H1 (cell line): ENCODE measurements at regions of chr5 and their contacts with region 1.

Region 1: DNA sequence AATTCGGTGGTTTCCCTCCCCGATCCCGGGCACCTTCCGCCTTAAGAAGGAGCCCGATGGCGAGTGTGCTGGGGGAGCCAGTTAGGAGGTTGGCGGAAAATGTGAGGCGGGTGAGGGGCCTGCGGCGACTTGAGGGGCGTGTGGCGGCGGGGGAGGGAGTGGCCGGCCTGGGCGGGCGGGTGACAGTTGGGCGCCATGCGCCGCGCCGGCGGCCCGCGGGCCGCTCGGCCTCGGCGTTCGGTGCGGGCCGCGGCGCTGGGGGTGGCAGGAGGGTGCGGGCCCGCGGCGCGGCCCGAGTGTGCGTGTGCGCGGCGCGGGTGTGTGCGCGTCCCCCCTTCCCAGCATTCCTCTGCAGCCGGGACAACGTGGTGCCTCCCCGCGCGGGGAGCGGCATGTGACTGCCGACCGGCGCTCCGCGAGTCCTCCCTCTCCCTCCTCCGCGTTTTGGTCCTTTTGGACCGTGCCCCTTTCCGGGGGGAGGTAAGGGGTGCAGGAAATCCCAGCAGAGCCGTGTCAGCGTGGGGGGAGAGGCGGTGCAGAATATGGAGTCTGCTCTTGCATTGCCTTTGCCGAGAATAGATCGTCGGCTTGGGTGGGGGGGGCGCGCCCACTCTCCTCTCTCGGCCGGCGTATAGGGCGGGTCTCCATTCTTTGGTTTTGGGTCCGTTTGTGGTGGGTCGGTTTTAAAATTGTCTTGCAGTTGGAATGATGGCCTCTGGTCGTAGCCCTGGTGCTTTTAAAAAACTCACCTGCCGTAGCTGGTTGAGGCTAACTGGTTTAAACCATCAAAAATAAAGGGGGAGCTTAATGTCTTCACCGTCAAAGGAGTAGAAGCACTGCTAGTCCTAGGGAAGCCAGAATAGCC is 1.9 kb downstream of the LARP1 start:
- DNase-seq: no peak
- H3K4me3 ChIP-seq: peak overlapping the region; percentile 66 to 98 (median 94)
- H3K27ac ChIP-seq: peak overlapping the region; percentile 84; the same call in 1 of the 2 replicates
- H3K4me1 ChIP-seq: peaks cover 16 to 35% (median 28%) of the 10 kb centered on the region in 4 experiments
- H3K27me3 ChIP-seq: no peaks in the 10 kb centered on the region
- CTCF ChIP-seq: no peak
- EP300 ChIP-seq: no peak
- POLR2A ChIP-seq: peak in 1 of 2 experiments; percentile 58; a peak in 2 of 3 replicates
- RAD21 ChIP-seq: no peak

Region 2: GRCh38 chr5:154547551-154547950 is 209.5 kb before region 1 on chr5:
- CTCF ChIA-PET with region 1: no interaction called
- POLR2A ChIA-PET with region 1: no interaction called
- DNase-seq: no peak
- H3K4me3 ChIP-seq: no peak overlapping the region
- H3K27ac ChIP-seq: no peak overlapping the region
- H3K4me1 ChIP-seq: no peaks in the 10 kb centered on the region
- H3K27me3 ChIP-seq: 0 out of 7 replicates have a peak, but pooled peaks cover 0 to 2% (median 0%) of the 10 kb centered on the region in 4 experiments
- CTCF ChIP-seq: no peak
- EP300 ChIP-seq: no peak
- POLR2A ChIP-seq: no peak
- RAD21 ChIP-seq: no peak

Region 3: GRCh38 chr5:154690489-154690888 is 66.6 kb before region 1 on chr5:
- CTCF ChIA-PET with region 1: interaction called, 7 read pairs
- POLR2A ChIA-PET with region 1: interaction called, 11 read pairs
- DNase-seq: no peak
- H3K4me3 ChIP-seq: no peak overlapping the region
- H3K27ac ChIP-seq: no peak overlapping the region
- H3K4me1 ChIP-seq: peaks cover 7 to 14% (median 10%) of the 10 kb centered on the region in 4 experiments; a peak in 6 of 7 replicates
- H3K27me3 ChIP-seq: no peaks in the 10 kb centered on the region
- CTCF ChIP-seq: no peak
- EP300 ChIP-seq: no peak
- POLR2A ChIP-seq: no peak
- RAD21 ChIP-seq: no peak

Region 4: DNA sequence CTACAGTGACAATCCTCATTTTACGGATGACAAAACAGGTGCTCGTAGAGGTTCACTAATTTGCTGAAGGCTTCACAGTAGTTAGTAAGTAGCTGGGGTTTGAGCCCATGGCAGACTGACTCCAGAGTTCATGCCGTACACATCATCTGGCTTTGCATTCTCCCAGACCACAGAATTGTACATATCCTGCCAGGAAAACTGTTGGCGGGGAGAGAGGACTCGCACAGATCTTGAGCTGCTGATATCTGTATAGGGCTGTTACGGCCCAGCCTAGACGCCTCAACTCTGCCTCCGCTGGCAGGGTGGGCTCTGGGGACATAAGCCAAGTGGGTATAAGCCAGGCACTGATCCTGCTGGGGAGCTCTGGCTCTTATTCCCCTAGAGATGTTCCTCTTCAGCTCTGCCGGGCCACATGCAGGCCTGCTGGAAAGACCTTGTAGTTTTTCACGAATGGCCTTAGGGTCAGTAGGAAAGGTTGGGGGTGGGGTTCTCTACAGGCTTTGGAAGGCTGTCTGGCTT is 14.4 kb after region 1 on chr5:
- CTCF ChIA-PET with region 1: interaction called, 9 read pairs
- POLR2A ChIA-PET with region 1: interaction called, 307 read pairs
- DNase-seq: no peak
- H3K4me3 ChIP-seq: no peak overlapping the region
- H3K27ac ChIP-seq: no peak overlapping the region
- H3K4me1 ChIP-seq: peaks cover 10 to 57% (median 46%) of the 10 kb centered on the region in 4 experiments
- H3K27me3 ChIP-seq: no peaks in the 10 kb centered on the region
- CTCF ChIP-seq: peak; percentile 10 to 22 (median 22); a peak in 3 of 4 replicates
- EP300 ChIP-seq: no peak
- POLR2A ChIP-seq: no peak
- RAD21 ChIP-seq: peak in 1 of 2 experiments; percentile 31; a peak in 1 of 4 replicates

Region 5: GRCh38 chr5:154783774-154784460 is 26.9 kb after region 1 on chr5:
- CTCF ChIA-PET with region 1: interaction called, 8 read pairs
- POLR2A ChIA-PET with region 1: interaction called, 307 read pairs
- DNase-seq: no peak
- H3K4me3 ChIP-seq: no peak overlapping the region
- H3K27ac ChIP-seq: no peak overlapping the region
- H3K4me1 ChIP-seq: peaks cover 16 to 39% (median 32%) of the 10 kb centered on the region in 4 experiments
- H3K27me3 ChIP-seq: no peaks in the 10 kb centered on the region
- CTCF ChIP-seq: no peak
- EP300 ChIP-seq: no peak
- POLR2A ChIP-seq: no peak
- RAD21 ChIP-seq: no peak; a peak in 1 of 4 replicates